Activated T-helper 2 cell treated with anti-CD3 and anti-CD28 coated beads, Interferon-gamma antibody, Interleukin-2, Interleukin-4, amounts not matched to agents 10 μg/mL and 5 μg/mL and 100 μg/mL, durations not matched to agents 14 hours and 24 hours and 36 hours (primary cell): ENCODE measurements at regions of chr16 and their contacts with region 1.

Region 1: DNA sequence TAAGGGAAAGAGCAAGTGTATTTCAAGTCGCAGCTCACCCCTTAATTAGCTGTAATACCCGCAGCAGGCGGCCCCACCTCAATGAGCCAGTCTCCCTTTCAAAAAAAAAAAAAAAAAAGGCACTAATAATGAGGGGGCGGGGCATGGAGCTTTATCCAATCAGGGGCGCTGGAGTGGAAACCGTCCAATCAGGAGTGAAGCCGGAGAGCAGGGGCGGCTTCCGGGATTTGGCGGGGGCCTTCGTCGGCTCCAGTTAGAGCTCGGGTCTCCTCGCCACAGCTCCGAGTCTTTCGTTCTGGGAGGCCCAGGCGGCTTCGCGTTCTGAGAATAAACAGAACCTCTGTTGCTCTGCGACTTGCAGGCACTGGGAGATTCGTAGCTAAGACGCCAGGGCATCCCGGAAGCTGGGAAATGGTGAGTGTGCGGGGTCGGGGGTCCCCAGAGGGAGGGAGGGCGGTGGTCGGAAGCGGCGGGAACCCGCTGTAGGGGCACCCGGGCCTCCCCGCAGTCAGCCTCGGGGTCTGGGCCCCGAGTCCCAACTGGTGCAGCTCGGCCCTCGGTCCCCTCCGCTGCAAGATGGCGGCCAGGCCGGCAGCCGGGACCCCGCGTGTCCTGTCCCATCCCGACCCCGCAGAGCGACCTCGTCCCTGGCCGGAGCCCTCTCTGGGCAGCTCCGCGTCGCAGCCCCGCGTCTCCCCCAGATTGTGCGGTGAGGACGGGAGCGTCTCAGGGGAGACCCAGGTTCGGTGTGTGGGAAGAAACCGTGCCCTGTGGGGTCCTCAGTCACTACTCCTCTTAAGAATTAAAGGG is at the start of gene ZNF267:
- DNase-seq: peak; percentile 90
- H3K4me3 Mint-ChIP-seq: peak within 1 kb of the TSS; percentile 99
- H3K27ac Mint-ChIP-seq: peak within 1 kb of the TSS; percentile 98
- H3K4me1 Mint-ChIP-seq: peaks cover 61% of the 10 kb centered on the region
- H3K27me3 Mint-ChIP-seq: no peaks in the 10 kb centered on the region
- total RNA-seq, gene ZNF267: 58.5 and 68.5 TPM in 2 replicates

Region 2: DNA sequence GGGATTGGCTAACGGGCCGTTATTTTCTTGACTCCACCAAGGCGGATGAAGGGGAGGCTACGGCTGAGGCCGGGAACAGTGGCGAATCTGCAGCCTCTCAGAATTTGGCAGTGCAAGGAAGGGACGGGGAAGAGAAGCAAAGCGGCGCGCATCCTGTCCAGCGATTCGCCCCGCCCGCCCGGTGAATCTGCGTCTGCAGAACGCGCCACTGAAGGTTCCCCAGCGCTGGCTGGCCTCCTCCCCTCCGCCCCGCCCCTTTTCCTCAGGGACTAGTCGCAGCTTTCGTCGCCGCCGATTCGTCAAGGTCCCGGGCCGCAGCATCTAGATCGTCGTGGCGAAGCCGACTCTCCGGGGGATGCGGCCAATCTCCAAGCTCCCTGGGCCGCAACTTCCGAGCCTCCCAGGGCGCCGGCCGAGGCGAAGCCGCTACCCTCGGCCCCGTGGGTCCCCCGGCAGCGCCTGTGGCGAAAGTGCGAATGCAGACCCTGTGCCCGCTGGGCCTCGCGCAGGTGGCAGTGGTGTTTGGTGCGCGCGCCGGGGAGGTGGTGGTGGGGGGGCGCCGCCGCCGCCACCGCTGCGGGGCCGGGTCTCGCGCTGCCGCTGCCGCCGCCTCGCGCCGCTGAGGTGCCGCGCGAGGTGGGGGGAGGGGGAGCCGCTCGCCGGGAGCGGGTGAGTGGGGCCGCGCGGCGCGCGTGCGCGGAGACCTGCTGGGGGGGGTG is 916.1 kb before region 1 on chr16 and contains the start of gene SETD1A:
- intact Hi-C with region 1: loop called (anchors 5 kb)
- DNase-seq: peak; percentile 94
- H3K4me3 Mint-ChIP-seq: peak within 1 kb of the TSS; percentile 95
- H3K27ac Mint-ChIP-seq: peak within 1 kb of the TSS; percentile 99
- H3K4me1 Mint-ChIP-seq: peaks cover 26% of the 10 kb centered on the region
- H3K27me3 Mint-ChIP-seq: no peaks in the 10 kb centered on the region
- total RNA-seq, gene SETD1A: 28.9 TPM in 2 replicates

Region 3: GRCh38 chr16:31108035-31108793 is 765.5 kb before region 1 on chr16 and contains the start of gene BCKDK:
- intact Hi-C with region 1: loop called (anchors 10 kb)
- DNase-seq: peak; percentile 65
- H3K4me3 Mint-ChIP-seq: peak within 1 kb of the TSS; percentile 85
- H3K27ac Mint-ChIP-seq: peak within 1 kb of the TSS; percentile 91
- H3K4me1 Mint-ChIP-seq: peaks cover 18% of the 10 kb centered on the region
- H3K27me3 Mint-ChIP-seq: no peaks in the 10 kb centered on the region
- total RNA-seq, gene BCKDK: 47.5 and 50.0 TPM in 2 replicates

Region 4: GRCh38 chr16:31888735-31889134 is 15.0 kb after region 1 on chr16:
- intact Hi-C with region 1: loop called (anchors 1 kb)
- DNase-seq: no peak
- H3K4me3 Mint-ChIP-seq: no peak overlapping the region
- H3K27ac Mint-ChIP-seq: peak overlapping the region; percentile 82
- H3K4me1 Mint-ChIP-seq: peaks cover 21% of the 10 kb centered on the region
- H3K27me3 Mint-ChIP-seq: no peaks in the 10 kb centered on the region

Region 5: DNA sequence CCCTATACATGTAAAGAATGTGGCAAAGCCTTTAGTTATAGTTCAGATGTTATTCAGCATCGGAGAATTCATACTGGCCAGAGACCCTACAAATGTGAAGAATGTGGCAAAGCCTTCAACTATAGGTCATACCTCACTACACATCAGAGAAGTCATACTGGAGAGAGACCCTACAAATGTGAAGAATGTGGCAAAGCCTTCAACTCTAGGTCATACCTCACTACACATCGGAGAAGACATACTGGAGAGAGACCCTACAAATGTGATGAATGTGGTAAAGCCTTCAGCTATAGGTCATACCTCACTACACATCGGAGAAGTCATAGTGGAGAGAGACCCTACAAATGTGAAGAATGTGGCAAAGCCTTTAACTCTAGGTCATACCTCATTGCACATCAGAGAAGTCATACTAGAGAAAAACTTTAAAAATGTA is 42.3 kb after region 1 on chr16:
- intact Hi-C with region 1: loop called (anchors 5 kb)
- DNase-seq: no peak
- H3K4me3 Mint-ChIP-seq: no peak overlapping the region
- H3K27ac Mint-ChIP-seq: no peak overlapping the region
- H3K4me1 Mint-ChIP-seq: no peaks in the 10 kb centered on the region
- H3K27me3 Mint-ChIP-seq: no peaks in the 10 kb centered on the region